PC-3 (cell line): ENCODE measurements at regions of chr17 and their contacts with region 1.

Region 1: DNA sequence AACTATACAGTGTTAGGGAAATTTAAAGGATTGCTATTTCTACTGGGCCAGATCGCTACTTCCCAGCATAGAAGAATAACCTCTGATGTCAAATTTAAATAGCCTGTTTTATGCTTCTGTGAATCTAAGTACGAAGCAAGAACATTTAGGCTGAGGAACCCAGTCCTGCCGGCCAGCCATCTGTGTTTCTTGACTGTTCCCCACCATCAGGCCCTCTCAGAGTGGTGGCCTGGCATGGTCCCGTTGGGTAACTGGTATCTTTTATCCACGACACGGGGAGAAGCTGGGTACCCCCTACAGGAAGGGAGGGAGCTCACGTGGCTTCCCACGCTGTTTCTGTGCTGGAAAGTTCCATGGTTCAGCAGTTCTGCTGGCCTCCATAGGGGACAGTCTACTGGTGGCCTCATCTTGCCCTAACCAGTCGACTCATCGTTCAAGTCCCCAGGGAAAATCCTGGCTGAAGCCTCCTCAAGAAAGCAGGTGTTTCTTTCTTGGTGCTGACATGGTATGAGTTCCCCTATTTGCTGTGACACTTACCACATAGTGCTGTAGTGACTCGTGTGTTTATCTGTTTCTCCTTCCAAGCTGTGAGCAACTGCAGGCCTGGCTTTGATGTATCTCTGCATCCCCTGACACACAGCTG is 201.7 kb upstream of the NLRP1 start:
- DNase-seq: peak; percentile 60
- ATAC-seq: peak; percentile 4; the same call in 1 of the 2 replicates
- H3K4me3 ChIP-seq: no peak overlapping the region
- H3K27ac ChIP-seq: peak overlapping the region; percentile 99
- H3K4me1 ChIP-seq: peaks cover 51% of the 10 kb centered on the region
- H3K27me3 ChIP-seq: no peaks in the 10 kb centered on the region
- CTCF ChIP-seq: no peak

Region 2: GRCh38 chr17:5715478-5715877 is 70.5 kb before region 1 on chr17:
- CTCF ChIA-PET with region 1: no interaction called
- POLR2A ChIA-PET with region 1: no interaction called
- intact Hi-C with region 1: loop called (anchors 5 kb)
- DNase-seq: no peak
- ATAC-seq: no peak
- H3K4me3 ChIP-seq: no peak overlapping the region
- H3K27ac ChIP-seq: no peak overlapping the region
- H3K4me1 ChIP-seq: peaks cover 21% of the 10 kb centered on the region
- H3K27me3 ChIP-seq: no peaks in the 10 kb centered on the region
- CTCF ChIP-seq: no peak

Region 3: GRCh38 chr17:5877948-5878347 is 92.0 kb after region 1 on chr17:
- CTCF ChIA-PET with region 1: no interaction called
- POLR2A ChIA-PET with region 1: no interaction called
- intact Hi-C with region 1: no loop called
- DNase-seq: peak; percentile 34
- ATAC-seq: peak; percentile 40; the same call in 1 of the 2 replicates
- H3K4me3 ChIP-seq: no peak overlapping the region
- H3K27ac ChIP-seq: no peak overlapping the region
- H3K4me1 ChIP-seq: peaks cover 7% of the 10 kb centered on the region; the same call in 1 of the 2 replicates
- H3K27me3 ChIP-seq: no peaks in the 10 kb centered on the region
- CTCF ChIP-seq: no peak